Activated T-helper 1 cell treated with anti-CD3 and anti-CD28 coated beads, Interleukin-12 subunit alpha, Interleukin-12 subunit beta, Interleukin-2, Interleukin-4 antibody, amounts not matched to agents 30 ng/mL and 10 ng/mL and 1 ng/mL, durations not matched to agents 14 hours and 24 hours and 36 hours (primary cell): ENCODE measurements at regions of chr5 and their contacts with region 1.

Region 1: GRCh38 chr5:58460732-58461286 is 923 bp upstream of the PLK2 start:
- DNase-seq: peak; percentile 85
- H3K4me3 Mint-ChIP-seq: peak overlapping the region; percentile 2
- H3K27ac Mint-ChIP-seq: peak overlapping the region; percentile 59
- H3K4me1 Mint-ChIP-seq: peaks cover 15% of the 10 kb centered on the region
- H3K27me3 Mint-ChIP-seq: peaks cover 16% of the 10 kb centered on the region

Region 2: GRCh38 chr5:56900858-56901578 is 1559.8 kb before region 1 on chr5:
- intact Hi-C with region 1: loop called (anchors 2 kb)
- DNase-seq: no peak
- H3K4me3 Mint-ChIP-seq: no peak overlapping the region
- H3K27ac Mint-ChIP-seq: no peak overlapping the region
- H3K4me1 Mint-ChIP-seq: no peaks in the 10 kb centered on the region
- H3K27me3 Mint-ChIP-seq: peaks cover 10% of the 10 kb centered on the region

Region 3: DNA sequence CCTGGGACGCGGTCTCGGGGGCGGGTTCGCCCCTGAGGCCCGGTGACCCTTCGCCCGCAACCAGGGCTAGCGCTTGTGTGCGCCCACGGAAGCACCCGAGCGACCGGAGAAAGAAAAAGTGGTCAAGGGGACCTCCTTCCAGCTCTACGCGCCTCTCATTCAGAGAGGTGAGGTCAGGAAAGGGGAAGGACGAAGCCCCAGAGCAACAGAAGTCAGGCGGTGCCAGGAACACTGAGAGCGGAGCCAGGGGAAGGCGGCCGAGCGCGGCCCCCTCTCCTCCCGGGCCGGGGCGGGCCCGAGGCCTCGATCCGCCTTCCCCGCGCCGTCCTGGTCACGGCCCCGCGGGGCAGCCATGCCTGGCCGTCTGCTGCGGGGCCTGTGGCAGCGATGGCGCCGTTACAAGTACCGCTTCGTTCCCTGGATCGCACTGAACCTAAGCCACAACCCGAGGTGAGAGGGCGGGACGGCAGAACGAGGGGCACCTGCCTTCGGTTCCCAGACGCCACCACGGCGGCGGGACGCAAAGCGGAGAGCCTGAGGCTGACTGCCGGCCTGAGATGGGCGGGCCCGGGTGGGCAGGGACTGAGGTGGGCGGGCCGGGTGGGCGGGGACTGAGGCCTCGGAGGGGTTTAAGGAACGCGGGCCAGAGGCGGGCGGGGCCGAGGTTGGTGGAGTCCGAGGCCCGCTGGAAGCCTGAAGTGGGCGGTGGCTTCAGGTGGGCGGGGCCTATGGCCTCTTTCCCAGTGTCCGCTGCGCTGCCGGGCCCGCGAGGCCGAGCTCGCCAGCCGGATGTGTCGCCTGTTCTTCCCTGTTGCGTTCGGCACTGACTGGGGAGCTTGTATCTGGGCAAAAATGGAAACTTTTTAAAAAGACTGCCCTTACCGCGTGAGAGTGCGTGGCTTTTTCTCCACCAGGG is 1551.3 kb before region 1 on chr5 and contains the start of gene SETD9:
- intact Hi-C with region 1: loop called (anchors 1 kb)
- DNase-seq: peak; percentile 90
- H3K4me3 Mint-ChIP-seq: peak within 1 kb of the TSS; percentile 90
- H3K27ac Mint-ChIP-seq: peak within 1 kb of the TSS; percentile 95
- H3K4me1 Mint-ChIP-seq: peaks cover 25% of the 10 kb centered on the region
- H3K27me3 Mint-ChIP-seq: peaks cover 19% of the 10 kb centered on the region
- total RNA-seq, gene SETD9: 13.6 and 14.9 TPM in 2 replicates

Region 4: DNA sequence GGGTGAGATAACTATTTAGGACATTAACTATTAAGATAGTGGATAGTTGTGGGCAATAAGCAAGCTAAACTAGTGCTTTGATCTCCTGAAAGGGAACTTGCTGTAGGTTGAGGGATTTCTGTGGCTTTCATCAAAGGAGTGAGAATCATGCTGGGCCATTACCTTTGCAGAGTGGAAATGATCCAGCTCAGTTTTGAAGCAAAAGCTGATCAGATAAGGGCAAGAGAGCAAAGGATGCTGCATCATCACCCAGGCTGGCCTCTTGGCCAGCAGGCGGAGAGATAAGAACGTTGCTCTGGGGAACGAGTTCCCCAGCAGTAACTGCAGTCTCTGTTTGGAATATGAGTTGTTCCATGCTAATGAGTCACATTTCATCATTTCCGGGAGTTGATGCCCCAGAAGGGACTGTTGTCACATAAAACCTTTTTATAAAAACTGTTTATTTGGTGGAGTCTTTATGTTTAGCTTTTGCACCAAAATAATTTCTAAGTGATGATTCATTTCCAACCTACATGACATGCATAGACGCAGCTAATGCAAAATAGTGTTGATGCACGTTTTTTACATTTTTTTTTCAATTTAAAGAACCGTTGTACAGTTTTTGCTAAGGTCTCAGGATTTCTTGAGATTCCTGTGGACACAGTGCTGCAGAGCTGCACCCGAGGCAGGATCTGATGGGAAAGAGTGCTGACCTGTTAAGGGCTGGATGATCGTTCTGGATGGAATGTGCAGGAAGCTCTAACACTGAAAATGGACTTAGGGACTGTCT is 1077.5 kb before region 1 on chr5:
- intact Hi-C with region 1: loop called (anchors 5 kb)
- DNase-seq: peak; percentile 16
- H3K4me3 Mint-ChIP-seq: peak overlapping the region; percentile 8
- H3K27ac Mint-ChIP-seq: peak overlapping the region; percentile 61
- H3K4me1 Mint-ChIP-seq: peaks cover 12% of the 10 kb centered on the region
- H3K27me3 Mint-ChIP-seq: peaks cover 2% of the 10 kb centered on the region

Region 5: DNA sequence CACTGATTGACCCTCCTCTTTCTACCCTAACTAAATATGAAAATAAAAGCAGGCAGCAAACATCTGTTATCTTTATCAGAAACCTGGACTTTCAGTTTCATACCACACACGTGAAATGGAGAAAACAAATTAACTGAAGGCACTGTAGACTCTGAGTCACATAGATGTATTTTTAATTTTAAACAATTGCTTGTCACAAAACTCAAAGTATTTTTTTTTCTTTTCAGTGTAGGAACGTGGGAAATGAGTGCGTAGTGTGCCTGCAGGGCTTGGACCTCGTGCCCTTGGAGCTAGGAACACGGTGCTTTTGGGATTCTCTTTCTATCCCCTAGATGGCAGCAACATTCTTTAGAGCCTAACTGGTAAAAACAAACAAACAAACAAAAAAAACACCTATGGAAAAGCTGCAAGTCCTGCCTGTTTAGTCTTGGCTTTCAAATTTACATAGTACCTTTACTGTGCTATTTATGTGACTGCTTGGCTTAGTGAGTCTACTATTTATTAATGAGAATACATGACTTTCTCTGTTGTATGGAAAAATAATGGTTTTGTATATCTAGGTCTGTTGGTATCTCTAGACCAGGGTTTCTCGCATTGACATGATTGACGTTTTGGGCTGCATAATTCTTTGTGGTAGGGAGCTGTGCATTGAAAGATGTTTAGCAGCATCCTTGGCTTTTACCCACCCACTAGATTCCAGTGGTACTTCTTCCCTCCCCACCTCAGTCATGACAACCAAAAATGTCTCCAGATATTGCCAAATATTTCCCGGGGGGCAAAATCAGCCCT is 961.4 kb before region 1 on chr5:
- intact Hi-C with region 1: loop called (anchors 1 kb)
- DNase-seq: no peak
- H3K4me3 Mint-ChIP-seq: peak overlapping the region; percentile 61
- H3K27ac Mint-ChIP-seq: no peak overlapping the region
- H3K4me1 Mint-ChIP-seq: peaks cover 36% of the 10 kb centered on the region
- H3K27me3 Mint-ChIP-seq: peaks cover 2% of the 10 kb centered on the region

Region 6: GRCh38 chr5:57650360-57651069 is 810.3 kb before region 1 on chr5:
- intact Hi-C with region 1: loop called (anchors 1 kb)
- DNase-seq: peak; percentile 2
- H3K4me3 Mint-ChIP-seq: no peak overlapping the region
- H3K27ac Mint-ChIP-seq: no peak overlapping the region
- H3K4me1 Mint-ChIP-seq: no peaks in the 10 kb centered on the region
- H3K27me3 Mint-ChIP-seq: peaks cover 6% of the 10 kb centered on the region

Region 7: GRCh38 chr5:57779383-57780223 is 681.2 kb before region 1 on chr5:
- intact Hi-C with region 1: loop called (anchors 1 kb)
- DNase-seq: no peak
- H3K4me3 Mint-ChIP-seq: no peak overlapping the region
- H3K27ac Mint-ChIP-seq: no peak overlapping the region
- H3K4me1 Mint-ChIP-seq: no peaks in the 10 kb centered on the region
- H3K27me3 Mint-ChIP-seq: peaks cover 1% of the 10 kb centered on the region

Region 8: DNA sequence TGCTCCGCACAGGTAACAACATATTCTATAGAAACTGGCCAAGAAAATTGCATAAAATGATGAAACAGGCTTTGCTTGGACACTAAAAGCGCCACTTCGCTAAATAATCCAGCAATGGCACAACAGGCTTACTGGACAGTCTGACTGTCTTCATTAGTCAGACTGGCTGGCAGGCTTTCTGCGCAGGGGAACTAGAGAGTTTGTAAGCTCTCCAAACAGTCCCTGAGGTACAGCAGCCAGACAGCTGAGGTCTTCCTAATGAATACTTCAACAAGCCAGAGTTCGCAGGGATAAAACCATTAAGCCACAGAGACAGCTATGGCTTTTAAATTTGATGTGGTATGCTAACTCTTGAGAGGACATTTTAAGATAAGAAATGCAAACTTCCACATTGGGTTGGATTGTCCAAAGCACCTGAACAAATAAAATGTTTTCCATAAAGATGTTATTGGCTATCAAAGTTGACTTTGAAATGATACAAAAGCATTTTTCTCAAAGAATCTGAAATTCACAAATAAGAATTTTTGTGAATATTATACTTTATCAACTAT is 21.6 kb before region 1 on chr5:
- intact Hi-C with region 1: no loop called
- DNase-seq: no peak
- H3K4me3 Mint-ChIP-seq: no peak overlapping the region
- H3K27ac Mint-ChIP-seq: no peak overlapping the region
- H3K4me1 Mint-ChIP-seq: no peaks in the 10 kb centered on the region
- H3K27me3 Mint-ChIP-seq: peaks cover 8% of the 10 kb centered on the region